Testis (tissue), 5 donors: ENCODE measurements at regions of chr12 and their contacts with region 1.

Region 1: DNA sequence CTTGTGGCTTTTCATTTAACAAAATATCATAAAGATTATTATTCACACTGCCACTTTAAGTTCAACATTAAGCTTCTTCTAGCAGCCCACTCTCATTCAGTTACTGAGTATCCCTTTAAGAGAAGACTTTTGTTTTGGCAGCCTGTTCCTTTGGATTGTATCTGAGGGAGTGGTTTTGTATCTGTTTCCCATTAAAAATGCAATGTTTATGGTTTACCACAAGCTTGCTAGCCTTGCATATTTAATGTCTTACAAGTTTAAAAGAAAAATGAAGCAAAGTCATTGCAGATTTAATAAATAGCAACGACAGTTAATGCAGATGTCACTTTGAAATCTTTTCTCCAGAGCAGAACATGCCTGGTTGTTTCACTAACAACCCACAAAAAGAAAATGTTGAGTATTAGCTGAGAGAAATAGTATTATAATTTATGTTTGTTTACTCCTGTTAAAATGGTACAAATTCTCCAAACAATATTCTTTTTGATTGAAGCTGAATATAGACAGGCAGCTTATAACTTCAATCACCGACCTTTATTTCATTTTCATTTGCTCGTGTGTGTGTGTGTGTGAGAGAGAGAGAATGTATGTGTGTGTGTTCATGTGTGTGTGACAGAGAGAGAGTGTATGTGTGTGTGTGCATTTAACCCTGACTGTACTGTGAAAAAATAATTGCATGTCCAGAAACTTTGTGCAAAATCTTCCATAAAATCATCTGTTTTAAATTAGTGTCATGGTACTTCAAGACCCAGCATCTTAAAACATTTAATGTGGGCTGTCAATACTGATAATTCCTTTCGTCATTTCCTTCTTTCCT is 1.8 kb downstream of the DCN start:
- DNase-seq: no peak
- H3K4me3 ChIP-seq: peak overlapping the region; percentile 25 to 36
- H3K27ac ChIP-seq: peak overlapping the region; percentile 83 to 90
- H3K4me1 ChIP-seq: no peaks in the 10 kb centered on the region
- H3K27me3 ChIP-seq: no peaks in the 10 kb centered on the region
- CTCF ChIP-seq: no peak
- POLR2A ChIP-seq: no peak

Region 2: GRCh38 chr12:91249518-91250272 is 68.9 kb after region 1 on chr12:
- intact Hi-C with region 1: loop called (anchors 10 kb)
- DNase-seq: no peak
- H3K4me3 ChIP-seq: no peak overlapping the region
- H3K27ac ChIP-seq: peak overlapping the region; percentile 19 to 85
- H3K4me1 ChIP-seq: peaks cover 6% of the 10 kb centered on the region
- H3K27me3 ChIP-seq: no peaks in the 10 kb centered on the region
- CTCF ChIP-seq: no peak
- POLR2A ChIP-seq: no peak

Region 3: GRCh38 chr12:91326058-91327027 is 145.6 kb after region 1 on chr12:
- intact Hi-C with region 1: loop called (anchors 10 kb)
- DNase-seq: peak; percentile 80
- H3K4me3 ChIP-seq: no peak overlapping the region
- H3K27ac ChIP-seq: peak overlapping the region; percentile 37 to 73
- H3K4me1 ChIP-seq: no peaks in the 10 kb centered on the region
- H3K27me3 ChIP-seq: no peaks in the 10 kb centered on the region
- CTCF ChIP-seq: peak; percentile 78 to 84 (median 80)
- POLR2A ChIP-seq: no peak